Activated naive CD4-positive, alpha-beta T cell treated with anti-CD3 and anti-CD28 coated beads, Interleukin-2, amount 10 ng/mL, durations not matched to agents 7 days and 5 days (primary cell): ENCODE measurements at regions of chr11 and their contacts with region 1.

Region 1: DNA sequence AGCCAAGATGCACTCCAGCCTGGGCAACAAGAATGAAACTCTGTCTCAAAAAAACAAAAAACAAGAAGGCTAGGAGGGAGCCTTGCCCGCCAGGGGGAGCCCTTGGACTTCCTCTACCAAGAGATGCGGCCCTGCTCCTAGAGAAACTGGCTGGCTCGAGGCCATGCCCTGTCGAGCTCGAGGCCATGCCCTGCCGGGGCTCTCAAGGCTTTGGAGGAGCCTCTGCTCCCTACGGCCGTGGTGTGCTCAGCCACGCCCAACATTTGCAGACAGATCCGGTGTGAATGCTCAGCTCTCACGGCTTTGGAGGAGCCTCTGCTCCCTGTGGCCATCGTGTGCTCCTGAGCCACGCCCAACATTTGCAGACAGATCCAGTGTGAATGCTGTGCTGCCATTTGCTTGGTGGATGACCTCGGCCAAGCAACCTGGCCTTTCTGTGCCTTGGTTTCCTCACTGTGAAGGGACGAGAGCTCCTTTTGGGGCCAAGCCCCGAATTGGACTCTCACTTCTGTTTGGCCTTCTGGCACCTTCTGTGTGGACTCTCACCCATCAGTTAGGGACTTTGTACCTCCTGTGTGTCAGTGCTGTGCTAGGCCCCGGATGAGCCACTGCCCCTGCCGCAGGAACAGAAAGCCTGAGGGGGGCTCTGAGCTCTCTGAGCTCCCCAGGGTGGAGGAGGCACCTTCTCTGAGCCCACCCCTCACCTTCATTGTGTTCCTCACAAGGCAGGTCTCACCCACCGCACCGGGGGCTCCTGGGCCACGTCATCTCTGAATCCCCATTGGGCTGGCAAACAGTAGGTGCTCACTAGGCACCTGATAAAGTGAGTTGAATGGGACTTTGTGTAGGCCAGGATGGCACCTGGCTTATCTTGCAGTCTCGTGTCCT is 14.1 kb downstream of the C11orf24 start:
- DNase-seq: peak; percentile 97
- H3K4me3 Mint-ChIP-seq: no peak overlapping the region
- H3K27ac Mint-ChIP-seq: no peak overlapping the region
- H3K4me1 Mint-ChIP-seq: peaks cover 4% of the 10 kb centered on the region
- H3K27me3 Mint-ChIP-seq: peaks cover 22% of the 10 kb centered on the region

Region 2: DNA sequence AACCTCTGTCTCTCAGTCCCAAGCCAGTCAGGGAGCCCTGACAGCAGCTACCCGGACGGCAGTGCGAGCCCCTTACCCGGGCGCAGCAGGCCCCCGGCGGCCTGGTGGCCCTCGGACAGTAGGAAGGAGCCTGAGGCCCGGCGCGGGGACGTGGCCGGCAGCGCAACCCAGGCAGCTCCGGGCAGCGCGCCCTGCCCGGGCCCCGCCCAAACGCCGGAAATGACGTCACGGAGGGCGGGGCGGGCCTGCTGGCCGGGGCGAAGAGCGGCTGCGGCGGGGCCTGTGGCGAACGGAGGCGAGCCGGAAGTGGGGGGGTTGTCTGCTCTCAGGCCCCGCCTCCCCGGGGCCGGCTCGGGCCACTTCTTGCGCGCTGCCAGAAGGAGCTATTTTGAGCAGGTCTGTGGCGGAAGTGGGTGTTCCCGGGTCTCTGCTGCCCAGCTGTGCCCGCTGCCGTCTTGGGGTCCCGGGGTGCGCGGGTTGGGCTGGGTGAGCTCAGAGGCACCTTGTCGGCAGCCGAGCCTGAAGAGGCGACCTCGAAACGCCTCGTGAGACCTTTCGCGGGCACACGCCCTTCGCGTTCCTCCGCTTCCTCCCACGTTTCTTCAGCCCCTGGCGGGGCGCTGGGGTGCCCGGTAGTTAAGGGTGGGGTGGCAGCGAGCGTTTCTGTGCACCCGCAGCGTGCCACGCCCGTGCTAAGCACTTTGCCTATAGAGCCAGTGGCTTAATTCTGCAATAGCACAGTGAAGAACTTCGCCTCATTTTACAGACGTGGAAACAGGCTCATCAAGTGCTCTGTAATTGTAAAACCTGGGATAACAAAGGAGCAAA is 14.3 kb after region 1 on chr11 and contains the start of gene C11orf24:
- CTCF ChIA-PET with region 1: interaction called, 19 read pairs
- DNase-seq: peak; percentile 94
- H3K4me3 Mint-ChIP-seq: peak within 1 kb of the TSS; percentile 96
- H3K27ac Mint-ChIP-seq: peak within 1 kb of the TSS; percentile 97
- H3K4me1 Mint-ChIP-seq: peaks cover 43% of the 10 kb centered on the region
- H3K27me3 Mint-ChIP-seq: peaks cover 4% of the 10 kb centered on the region

Region 3: GRCh38 chr11:68383976-68384501 is 126.3 kb after region 1 on chr11:
- CTCF ChIA-PET with region 1: interaction called, 37 read pairs
- DNase-seq: peak; percentile 79
- H3K4me3 Mint-ChIP-seq: no peak overlapping the region
- H3K27ac Mint-ChIP-seq: no peak overlapping the region
- H3K4me1 Mint-ChIP-seq: peaks cover 47% of the 10 kb centered on the region
- H3K27me3 Mint-ChIP-seq: no peaks in the 10 kb centered on the region